PC-9 (cell line): ENCODE measurements at regions of chr10 and their contacts with region 1.

Region 1: GRCh38 chr10:30186371-30186875 is 127.0 kb upstream of the JCAD start:
- DNase-seq: peak; percentile 35 to 61
- H3K4me3 ChIP-seq: peak overlapping the region; percentile 17; the same call in 1 of the 2 replicates
- H3K27ac ChIP-seq: peak overlapping the region; percentile 49
- H3K4me1 ChIP-seq: peaks cover 55% of the 10 kb centered on the region
- H3K27me3 ChIP-seq: no peaks in the 10 kb centered on the region
- CTCF ChIP-seq: no peak; the same call in 1 of the 2 replicates

Region 2: DNA sequence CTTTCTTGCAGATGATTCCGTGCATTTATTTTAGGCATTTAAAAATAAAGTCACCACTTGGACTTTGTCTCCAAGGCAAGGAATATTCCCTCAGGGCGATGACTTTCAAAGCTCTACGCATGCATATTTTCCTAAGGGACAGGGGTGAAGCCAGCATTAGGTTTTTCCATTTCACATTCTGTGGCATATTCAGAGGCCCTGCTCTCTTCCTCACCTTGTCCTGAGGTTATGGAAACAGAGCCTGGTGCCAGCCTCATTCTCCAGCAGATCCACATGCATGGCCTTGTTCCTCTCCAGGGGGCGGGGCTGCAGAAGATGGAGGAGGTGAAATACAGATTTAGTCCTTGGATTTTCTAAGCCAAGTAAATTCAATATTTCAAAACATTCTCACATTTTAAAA is 909.1 kb before region 1 on chr10:
- CTCF ChIA-PET with region 1: no interaction called
- POLR2A ChIA-PET with region 1: no interaction called
- intact Hi-C with region 1: no loop called
- DNase-seq: no peak
- H3K4me3 ChIP-seq: no peak overlapping the region
- H3K27ac ChIP-seq: no peak overlapping the region
- H3K4me1 ChIP-seq: no peaks in the 10 kb centered on the region
- H3K27me3 ChIP-seq: peaks cover 7% of the 10 kb centered on the region; the same call in 1 of the 2 replicates
- CTCF ChIP-seq: no peak

Region 3: DNA sequence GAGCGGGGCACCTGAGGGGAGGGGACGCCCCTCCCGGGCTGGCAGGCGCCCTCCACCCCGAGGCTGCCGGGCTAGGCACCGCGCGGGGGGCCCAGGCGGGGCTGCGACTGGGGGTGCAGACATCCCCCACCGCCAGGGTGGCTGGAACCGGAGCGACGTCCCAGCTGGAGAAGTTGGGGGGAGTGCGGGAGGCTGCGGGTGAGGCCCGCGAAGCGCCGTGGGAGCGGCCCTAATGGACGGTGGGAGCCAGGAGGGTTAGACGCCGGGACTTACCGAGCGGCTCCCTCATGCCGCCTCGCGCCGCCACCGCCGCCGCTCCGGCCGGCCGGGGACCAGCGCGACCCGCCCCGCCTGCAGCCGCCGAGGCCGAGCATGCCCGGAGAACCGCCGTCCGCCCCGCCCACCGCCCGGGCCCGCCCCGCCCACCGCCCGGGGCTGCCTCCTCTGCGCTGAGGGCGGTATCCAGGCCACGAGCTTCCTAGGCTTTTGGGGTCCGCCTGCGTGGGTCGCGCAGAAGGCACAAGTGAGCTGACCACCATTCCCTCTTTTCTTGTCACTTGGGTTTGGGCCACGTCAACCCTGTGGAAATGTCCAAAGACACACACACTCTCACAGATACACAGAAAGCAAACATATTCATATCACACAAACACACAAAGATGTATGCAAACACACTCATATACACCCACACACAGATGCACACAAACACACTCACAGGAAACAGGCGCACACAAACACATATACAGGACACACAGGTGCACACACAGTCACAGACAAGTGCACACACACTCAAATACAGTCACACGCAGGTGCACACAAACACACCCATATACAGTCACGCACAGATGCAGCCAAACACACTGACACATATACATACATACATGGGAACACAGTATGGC is 127.0 kb before region 1 on chr10 and contains the start of gene JCAD:
- CTCF ChIA-PET with region 1: no interaction called
- POLR2A ChIA-PET with region 1: interaction called, 3 read pairs
- intact Hi-C with region 1: loop called (anchors 1 kb)
- DNase-seq: peak in 1 of 2 experiments; percentile 82
- H3K4me3 ChIP-seq: peak within 1 kb of the TSS; percentile 65
- H3K27ac ChIP-seq: peak within 1 kb of the TSS; percentile 72; the same call in 1 of the 2 replicates
- H3K4me1 ChIP-seq: peaks cover 37% of the 10 kb centered on the region
- H3K27me3 ChIP-seq: no peaks in the 10 kb centered on the region
- CTCF ChIP-seq: no peak
- total RNA-seq, gene JCAD: 30.5 and 36.7 TPM in 2 replicates

Region 4: GRCh38 chr10:30151581-30152389 is 34.6 kb before region 1 on chr10:
- CTCF ChIA-PET with region 1: interaction called, 5 read pairs
- POLR2A ChIA-PET with region 1: no interaction called
- intact Hi-C with region 1: loop called (anchors 2 kb)
- DNase-seq: peak; percentile 80 to 84
- H3K4me3 ChIP-seq: no peak overlapping the region
- H3K27ac ChIP-seq: no peak overlapping the region
- H3K4me1 ChIP-seq: peaks cover 11% of the 10 kb centered on the region
- H3K27me3 ChIP-seq: no peaks in the 10 kb centered on the region
- CTCF ChIP-seq: no peak; the same call in 1 of the 2 replicates

Region 5: DNA sequence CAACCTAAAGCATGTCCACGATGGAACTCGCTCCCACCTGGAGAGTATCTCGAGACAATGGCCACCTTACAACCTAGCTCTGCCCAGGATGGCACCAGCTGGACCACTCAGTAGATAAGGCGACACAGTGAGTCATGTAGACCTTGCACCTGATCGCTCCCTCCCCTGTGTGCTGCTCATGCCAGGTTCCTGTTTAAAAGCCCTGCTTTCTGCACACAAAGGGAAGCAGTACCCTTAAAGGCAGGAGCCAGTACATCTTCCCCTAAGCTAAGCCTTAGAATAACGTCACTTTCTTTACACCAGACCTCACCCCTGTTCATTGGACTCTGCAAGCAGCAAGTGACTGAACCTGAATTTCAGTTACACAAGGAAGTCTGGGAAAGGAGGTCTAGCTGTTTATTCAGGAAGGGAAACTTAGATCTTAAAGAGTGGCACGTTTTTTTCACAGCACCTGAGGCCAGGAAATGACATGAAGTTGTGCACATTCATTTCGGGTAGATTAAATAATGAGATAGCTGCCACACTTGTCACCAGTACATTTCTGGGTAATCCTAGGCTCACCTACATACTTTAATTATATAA is 44.7 kb after region 1 on chr10:
- CTCF ChIA-PET with region 1: interaction called, 3 read pairs
- POLR2A ChIA-PET with region 1: no interaction called
- intact Hi-C with region 1: loop called (anchors 1 kb)
- DNase-seq: peak; percentile 38 to 79
- H3K4me3 ChIP-seq: no peak overlapping the region
- H3K27ac ChIP-seq: no peak overlapping the region
- H3K4me1 ChIP-seq: peaks cover 11% of the 10 kb centered on the region
- H3K27me3 ChIP-seq: no peaks in the 10 kb centered on the region
- CTCF ChIP-seq: no peak

Region 6: GRCh38 chr10:30348378-30348776 is 162.0 kb after region 1 on chr10:
- CTCF ChIA-PET with region 1: no interaction called
- POLR2A ChIA-PET with region 1: interaction called, 13 read pairs
- intact Hi-C with region 1: no loop called
- DNase-seq: no peak
- H3K4me3 ChIP-seq: peak overlapping the region; percentile 78
- H3K27ac ChIP-seq: peak overlapping the region; percentile 70
- H3K4me1 ChIP-seq: peaks cover 8% of the 10 kb centered on the region
- H3K27me3 ChIP-seq: no peaks in the 10 kb centered on the region
- CTCF ChIP-seq: no peak